ENCODE measurements at regions of chr16 and their contacts with region 1.

Region 1: DNA sequence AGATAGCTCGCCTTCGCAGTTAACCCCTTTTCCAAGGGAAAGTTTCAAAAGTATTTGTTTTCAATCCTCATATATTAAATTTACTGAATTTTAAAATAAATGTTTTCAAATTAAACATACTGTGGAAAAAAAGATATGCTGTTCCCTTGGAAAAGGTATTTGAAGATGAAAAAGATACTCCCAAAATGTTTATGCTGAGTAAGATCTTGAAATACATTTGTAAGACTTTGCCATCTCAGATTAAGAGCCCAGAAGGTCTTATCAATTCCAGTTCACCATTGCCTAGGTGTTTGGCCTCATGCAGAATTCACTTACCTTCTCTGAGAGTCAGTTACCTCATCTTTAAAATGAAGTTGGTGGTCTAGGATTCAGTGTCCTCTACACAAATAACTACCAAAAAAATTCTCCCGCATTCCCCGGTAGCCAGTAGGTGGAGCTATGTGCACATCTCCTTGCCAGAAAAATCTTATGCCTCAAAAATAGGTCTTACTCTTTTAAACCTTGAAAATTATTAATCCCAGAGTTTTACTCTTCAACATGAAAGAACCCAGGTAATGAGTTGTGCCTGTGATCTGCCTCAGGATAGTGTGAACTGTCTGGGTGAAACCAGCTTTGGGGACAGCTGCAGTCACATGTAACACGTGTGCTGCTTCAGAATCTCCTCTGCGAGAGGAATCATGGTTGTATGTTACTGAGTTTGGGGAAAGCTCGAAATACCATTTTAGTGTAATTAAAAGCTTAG is 178.3 kb downstream of the MRTFB start:
- DNase-seq: peak; percentile 66
- ATAC-seq: no peak
- H3K4me3 Mint-ChIP-seq: no peak overlapping the region
- H3K27ac Mint-ChIP-seq: no peak overlapping the region
- H3K4me1 Mint-ChIP-seq: peaks cover 3% of the 10 kb centered on the region
- H3K27me3 Mint-ChIP-seq: no peaks in the 10 kb centered on the region
- CTCF ChIP-seq: peak; percentile 90

Region 2: DNA sequence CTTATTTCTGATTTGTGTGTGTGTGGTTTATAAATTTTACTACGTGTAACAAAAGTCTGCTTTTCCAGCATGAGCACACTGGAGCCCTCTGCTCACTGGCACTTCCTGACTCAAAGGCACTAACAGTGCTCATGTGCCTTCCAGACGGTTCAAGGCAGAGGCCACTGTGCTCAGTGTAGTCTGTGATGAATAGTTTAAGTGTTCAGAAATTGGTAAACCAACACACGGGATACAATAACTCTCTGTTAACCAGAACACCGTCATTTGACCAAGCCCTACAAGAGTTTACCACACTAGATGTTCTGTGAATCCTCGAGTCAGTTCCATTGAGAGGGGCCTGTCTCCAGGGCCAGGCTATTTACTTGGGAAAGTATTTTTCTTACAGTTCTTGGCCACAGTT is 13.5 kb after region 1 on chr16:
- CTCF ChIA-PET with region 1: interaction called, 10 read pairs
- POLR2A ChIA-PET with region 1: no interaction called
- intact Hi-C with region 1: no loop called
- DNase-seq: no peak
- ATAC-seq: no peak
- H3K4me3 Mint-ChIP-seq: no peak overlapping the region
- H3K27ac Mint-ChIP-seq: no peak overlapping the region
- H3K4me1 Mint-ChIP-seq: no peaks in the 10 kb centered on the region
- H3K27me3 Mint-ChIP-seq: no peaks in the 10 kb centered on the region
- CTCF ChIP-seq: no peak

Region 3: DNA sequence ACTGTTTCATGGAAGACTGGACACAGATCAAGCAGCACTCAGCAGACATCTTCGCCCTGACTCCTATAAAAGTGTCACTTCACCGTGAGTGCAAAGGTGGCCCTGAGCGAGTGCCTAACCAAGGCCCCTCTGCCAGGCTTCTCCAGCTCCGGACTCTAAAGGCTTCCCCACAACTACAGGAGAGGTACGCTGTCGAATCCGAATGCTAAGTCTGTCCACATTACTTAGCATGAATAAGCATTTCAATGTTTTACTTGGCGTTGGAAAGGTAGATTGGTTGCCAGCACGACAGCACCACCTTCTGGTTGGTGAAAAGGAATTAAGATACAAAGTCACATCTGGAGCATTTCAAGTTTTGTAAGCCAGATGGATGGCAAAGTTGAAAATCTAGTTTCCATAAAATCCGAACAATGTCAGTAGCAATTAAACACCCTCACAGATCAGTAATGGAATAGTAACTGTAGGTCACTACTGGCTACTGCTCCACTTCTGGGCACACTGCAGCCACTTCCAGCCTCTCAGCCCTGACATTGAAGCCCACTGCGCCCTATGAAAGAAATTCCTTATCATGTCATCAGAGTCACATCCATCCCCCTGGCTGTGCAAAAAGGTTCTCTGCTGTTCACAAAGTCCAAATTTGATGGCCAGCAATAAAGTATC is 279.7 kb after region 1 on chr16:
- CTCF ChIA-PET with region 1: interaction called, 10 read pairs
- POLR2A ChIA-PET with region 1: no interaction called
- intact Hi-C with region 1: loop called (anchors 5 kb)
- DNase-seq: peak; percentile 64
- ATAC-seq: peak; percentile 42
- H3K4me3 Mint-ChIP-seq: no peak overlapping the region
- H3K27ac Mint-ChIP-seq: no peak overlapping the region
- H3K4me1 Mint-ChIP-seq: peaks cover 2% of the 10 kb centered on the region
- H3K27me3 Mint-ChIP-seq: no peaks in the 10 kb centered on the region
- CTCF ChIP-seq: peak; percentile 67

Region 4: DNA sequence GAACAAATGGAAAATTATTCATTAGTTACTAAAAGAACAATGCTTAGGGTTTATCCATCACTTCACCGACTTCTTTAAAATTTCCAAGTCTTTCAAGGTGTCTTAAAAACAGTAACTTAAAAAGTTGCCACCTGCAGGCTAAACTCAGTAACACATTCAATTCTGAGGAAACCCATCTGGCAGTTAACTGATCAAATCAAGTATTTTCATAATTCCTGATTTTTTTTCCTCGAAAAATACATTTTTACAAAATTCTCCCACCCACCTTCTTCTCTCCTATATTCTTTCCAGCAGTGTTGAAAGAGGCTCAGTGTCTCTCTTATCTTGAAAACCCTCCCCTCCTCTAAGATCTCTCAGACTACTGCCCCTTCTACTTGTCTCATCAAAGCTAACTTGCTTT is 350.7 kb after region 1 on chr16:
- CTCF ChIA-PET with region 1: interaction called, 16 read pairs
- POLR2A ChIA-PET with region 1: no interaction called
- intact Hi-C with region 1: no loop called
- DNase-seq: no peak
- ATAC-seq: no peak
- H3K4me3 Mint-ChIP-seq: no peak overlapping the region
- H3K27ac Mint-ChIP-seq: no peak overlapping the region
- H3K4me1 Mint-ChIP-seq: no peaks in the 10 kb centered on the region
- H3K27me3 Mint-ChIP-seq: no peaks in the 10 kb centered on the region
- CTCF ChIP-seq: peak; percentile 60